Dorsolateral prefrontal cortex (tissue), 120 donors: ENCODE measurements at regions of chr3 and their contacts with region 1.

Region 1: GRCh38 chr3:23916886-23917678 is at the starts of genes NKIRAS1 and RPL15:
- DNase-seq: peak; percentile 89 to 97 (median 96)
- H3K4me3 ChIP-seq: peak within 1 kb of the TSS; percentile 64 to 99 (median 91)
- H3K27ac ChIP-seq: peak within 1 kb of the TSS; percentile 58 to 98 (median 92)
- H3K27me3 ChIP-seq: no peaks in the 10 kb centered on the region
- CTCF ChIP-seq: peak in 55 of 56 donors; percentile 35 to 79 (median 64)
- total RNA-seq, gene NKIRAS1: 22.5 to 64.8 (median 46.6) TPM
- total RNA-seq, gene RPL15: 579 to 1,036 (median 800) TPM

Region 2: DNA sequence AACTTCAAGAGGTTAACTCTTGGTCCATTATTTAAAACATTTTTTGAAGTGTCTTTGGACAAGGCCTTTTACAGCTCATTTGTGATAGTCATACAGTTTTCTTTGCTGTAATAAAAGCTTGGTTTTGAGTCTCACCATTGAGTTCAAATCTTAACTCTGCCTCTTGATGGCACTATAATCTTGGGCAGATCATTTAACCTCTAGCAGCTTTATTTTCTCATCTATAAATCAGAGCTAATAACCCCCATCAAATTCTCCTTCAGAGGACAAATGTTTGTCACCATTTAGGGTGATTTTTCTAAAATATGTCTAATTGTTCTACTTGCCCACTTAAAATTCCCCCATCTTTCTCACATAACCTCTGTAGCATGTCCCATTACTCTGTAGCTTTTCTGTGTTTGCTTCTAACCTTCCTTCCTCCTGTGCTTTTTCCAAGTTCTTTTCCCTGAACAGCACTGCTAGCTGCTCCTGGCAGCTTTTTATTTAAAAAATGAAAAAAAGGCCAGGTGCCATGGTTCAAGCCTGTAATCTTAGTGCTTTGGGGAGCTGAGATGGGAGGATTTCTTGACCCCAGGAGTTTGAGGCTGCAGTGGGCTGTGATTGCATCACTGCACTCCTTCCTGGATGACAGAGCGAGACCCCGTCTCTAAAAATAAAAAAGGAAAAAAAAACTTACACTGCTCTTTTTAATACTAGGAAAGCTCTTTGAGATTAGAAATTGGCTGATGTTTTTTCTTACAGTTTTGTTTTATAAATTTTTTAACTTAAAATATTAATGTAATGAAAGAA is 82.8 kb before region 1 on chr3:
- intact Hi-C with region 1: loop called in 1 of 2 experiments (anchors 10 kb)
- DNase-seq: no peak
- H3K4me3 ChIP-seq: no peak overlapping the region
- H3K27ac ChIP-seq: peak overlapping the region in 5 of 59 donors; percentile 18 to 41 (median 35)
- H3K27me3 ChIP-seq: no peaks in the 10 kb centered on the region
- CTCF ChIP-seq: peak in 46 of 56 donors; percentile 11 to 67 (median 40)

Region 3: GRCh38 chr3:23945903-23946751 is 29.0 kb after region 1 on chr3:
- intact Hi-C with region 1: loop called (anchors 1 kb)
- DNase-seq: peak; percentile 95 to 98 (median 96)
- H3K4me3 ChIP-seq: peak overlapping the region; percentile 58 to 99 (median 87)
- H3K27ac ChIP-seq: peak overlapping the region; percentile 75 to 100 (median 97)
- H3K27me3 ChIP-seq: no peaks in the 10 kb centered on the region
- CTCF ChIP-seq: peak in 10 of 56 donors; percentile 6 to 35 (median 18)

Region 4: DNA sequence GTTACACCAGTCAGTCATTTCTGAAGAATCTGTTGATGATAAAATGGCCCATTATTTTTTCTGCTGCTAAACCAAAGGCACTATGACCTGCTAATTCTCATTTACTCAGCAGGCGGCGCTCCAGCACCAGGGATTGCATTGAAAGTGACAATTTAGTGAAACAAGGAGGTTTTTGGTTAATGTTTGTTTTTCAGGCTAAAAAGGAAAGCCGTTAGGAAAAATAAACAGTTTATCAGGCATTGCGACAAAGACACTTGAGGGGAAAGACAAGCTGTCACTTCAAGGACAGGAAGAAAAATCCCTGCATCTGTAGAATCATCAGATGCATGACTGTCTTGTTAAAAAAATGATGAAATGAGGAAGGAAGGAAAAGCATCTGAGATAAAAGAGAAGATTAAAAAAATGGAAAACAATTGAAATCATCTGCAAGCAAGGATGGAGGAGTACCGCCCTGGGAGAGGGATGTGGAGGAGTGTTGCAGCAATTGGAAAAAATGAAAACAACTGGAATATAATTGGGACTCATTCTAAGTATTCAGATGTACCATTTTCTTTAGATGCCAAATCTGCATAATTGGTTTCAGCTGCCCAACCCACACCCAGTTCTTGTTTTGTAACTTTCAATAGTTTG is 82.0 kb after region 1 on chr3:
- intact Hi-C with region 1: loop called in 1 of 2 experiments (anchors 5 kb)
- DNase-seq: peak; percentile 56 to 96 (median 79)
- H3K4me3 ChIP-seq: peak overlapping the region in 41 of 59 donors; percentile 0 to 55 (median 34)
- H3K27ac ChIP-seq: peak overlapping the region in 55 of 59 donors; percentile 1 to 87 (median 73)
- H3K27me3 ChIP-seq: no peaks in the 10 kb centered on the region
- CTCF ChIP-seq: peak; percentile 80 to 98 (median 93)